ENCODE measurements at regions of chr17 and their contacts with region 1.

Region 1: DNA sequence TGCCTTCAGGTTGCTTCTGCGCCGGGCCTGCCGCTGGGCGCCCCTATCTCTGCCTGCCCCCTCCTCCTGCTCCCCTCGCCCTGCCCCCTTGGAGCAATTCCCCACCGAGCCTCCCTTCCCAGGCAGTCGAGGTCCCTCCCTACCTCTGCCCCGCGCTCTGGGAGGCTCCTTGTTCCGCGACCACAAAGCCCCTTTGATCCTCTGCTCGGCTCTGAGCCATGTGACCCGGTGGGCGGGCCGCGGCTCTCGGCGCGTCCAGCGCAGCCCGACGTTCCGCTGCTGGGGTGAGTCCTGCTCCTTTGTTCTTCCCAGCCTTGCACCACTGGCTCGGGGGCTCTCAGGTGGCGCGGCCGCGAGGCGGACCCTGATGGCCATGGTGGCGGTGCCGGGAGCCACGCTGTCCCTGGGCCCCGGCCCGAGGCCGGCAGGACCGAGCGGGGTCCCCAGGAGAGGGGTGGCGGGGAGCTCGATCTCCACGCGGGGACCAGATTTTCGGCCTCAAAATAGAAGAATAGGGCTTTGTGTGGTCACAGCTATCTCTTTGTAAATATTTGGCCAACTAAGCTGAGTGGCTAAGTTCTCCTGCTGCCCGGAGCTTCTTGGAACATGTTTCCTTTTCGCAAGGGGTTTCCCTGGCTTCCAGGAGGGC is 310.6 kb downstream of the SEC14L1 start:
- DNase-seq: peak; percentile 36 to 86 (median 73)
- ATAC-seq: peak; percentile 25
- H3K4me3 ChIP-seq: peak overlapping the region; percentile 93 to 99
- H3K4me3 Mint-ChIP-seq: peak overlapping the region; percentile 94
- H3K27ac ChIP-seq: peak overlapping the region; percentile 80 to 86
- H3K27ac Mint-ChIP-seq: peak overlapping the region; percentile 100
- H3K4me1 ChIP-seq: peaks cover 54% of the 10 kb centered on the region
- H3K4me1 Mint-ChIP-seq: peaks cover 50% of the 10 kb centered on the region
- H3K27me3 ChIP-seq: no peaks in the 10 kb centered on the region
- H3K27me3 Mint-ChIP-seq: no peaks in the 10 kb centered on the region
- CTCF ChIP-seq: no peak

Region 2: DNA sequence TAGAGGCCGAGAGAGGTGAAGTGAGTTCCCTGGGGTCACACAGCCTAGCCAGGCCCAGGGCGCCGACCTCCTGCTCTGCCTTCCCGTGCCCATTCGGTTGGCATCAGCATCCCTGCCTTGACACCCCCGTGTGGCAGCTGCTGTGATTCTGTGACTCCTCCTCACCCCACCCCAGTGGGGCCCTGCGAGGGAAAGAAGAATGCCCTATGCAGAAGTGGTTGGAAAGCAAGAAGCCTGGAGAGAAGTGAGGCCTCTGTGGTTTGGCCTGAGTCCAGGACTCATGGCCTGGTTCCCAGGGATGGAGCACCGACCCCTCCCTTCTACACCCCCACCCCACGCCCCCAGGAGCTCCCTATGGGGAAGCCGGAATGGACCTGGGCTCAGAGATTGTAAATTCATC is 14.4 kb before region 1 on chr17:
- CTCF ChIA-PET with region 1: interaction called, 142 read pairs
- POLR2A ChIA-PET with region 1: interaction called, 242 read pairs
- intact Hi-C with region 1: loop called (anchors 1 kb)
- DNase-seq: peak in 6 of 9 experiments; percentile 42 to 61 (median 56)
- ATAC-seq: no peak
- H3K4me3 ChIP-seq: peak overlapping the region in 1 of 2 experiments; percentile 70
- H3K4me3 Mint-ChIP-seq: peak overlapping the region; percentile 95
- H3K27ac ChIP-seq: peak overlapping the region; percentile 46 to 66
- H3K27ac Mint-ChIP-seq: peak overlapping the region; percentile 97
- H3K4me1 ChIP-seq: peaks cover 83% of the 10 kb centered on the region
- H3K4me1 Mint-ChIP-seq: peaks cover 88% of the 10 kb centered on the region
- H3K27me3 ChIP-seq: no peaks in the 10 kb centered on the region
- H3K27me3 Mint-ChIP-seq: no peaks in the 10 kb centered on the region
- CTCF ChIP-seq: no peak

Region 3: DNA sequence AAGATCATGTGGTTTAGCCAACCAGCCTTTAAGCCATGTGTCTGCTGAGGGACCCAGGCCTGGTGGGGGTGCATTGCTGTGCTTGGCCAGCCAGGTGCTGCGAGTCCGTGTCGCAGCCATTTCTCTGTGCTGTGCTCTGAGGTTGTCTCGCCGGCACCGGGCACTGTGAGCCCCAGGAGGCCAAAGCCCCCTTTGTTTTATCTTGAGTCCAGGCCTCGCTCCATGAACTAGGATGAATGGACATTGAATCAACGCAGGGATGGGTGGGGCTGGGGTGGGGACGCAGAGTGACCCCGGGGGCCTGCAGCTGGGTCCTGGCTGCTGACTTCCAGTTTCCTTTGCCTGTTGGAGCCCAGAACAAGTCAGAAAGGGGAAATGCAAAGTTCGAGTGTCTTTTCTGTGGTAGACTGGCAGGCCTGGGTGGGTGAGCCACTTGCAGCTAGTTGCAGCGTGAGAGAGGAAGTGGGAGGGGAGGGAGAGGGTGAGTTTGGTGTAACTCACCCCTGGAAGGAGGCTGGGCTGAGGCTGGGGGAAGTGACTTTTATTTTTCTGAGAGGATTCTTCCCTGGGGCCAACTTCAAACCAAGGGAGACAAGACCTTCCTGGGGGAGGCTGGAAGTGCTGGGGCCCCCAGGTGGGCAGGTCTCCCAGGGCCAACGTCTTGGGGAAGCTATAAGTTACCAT is 14.1 kb after region 1 on chr17:
- CTCF ChIA-PET with region 1: interaction called, 5 read pairs
- POLR2A ChIA-PET with region 1: interaction called, 242 read pairs
- intact Hi-C with region 1: loop called in 1 of 2 experiments (anchors 2 kb)
- DNase-seq: peak; percentile 58 to 93 (median 82)
- ATAC-seq: peak; percentile 91
- H3K4me3 ChIP-seq: peak overlapping the region; percentile 29 to 51
- H3K4me3 Mint-ChIP-seq: peak overlapping the region; percentile 71
- H3K27ac ChIP-seq: peak overlapping the region; percentile 28 to 68
- H3K27ac Mint-ChIP-seq: peak overlapping the region; percentile 94
- H3K4me1 ChIP-seq: peaks cover 94% of the 10 kb centered on the region
- H3K4me1 Mint-ChIP-seq: peaks cover 87% of the 10 kb centered on the region
- H3K27me3 ChIP-seq: no peaks in the 10 kb centered on the region
- H3K27me3 Mint-ChIP-seq: no peaks in the 10 kb centered on the region
- CTCF ChIP-seq: no peak

Region 4: GRCh38 chr17:77590951-77591735 is 139.8 kb after region 1 on chr17:
- CTCF ChIA-PET with region 1: no interaction called
- POLR2A ChIA-PET with region 1: no interaction called
- intact Hi-C with region 1: no loop called
- DNase-seq: no peak
- ATAC-seq: no peak
- H3K4me3 ChIP-seq: no peak overlapping the region
- H3K4me3 Mint-ChIP-seq: no peak overlapping the region
- H3K27ac ChIP-seq: no peak overlapping the region
- H3K27ac Mint-ChIP-seq: no peak overlapping the region
- H3K4me1 ChIP-seq: peaks cover 12% of the 10 kb centered on the region
- H3K4me1 Mint-ChIP-seq: peaks cover 17% of the 10 kb centered on the region
- H3K27me3 ChIP-seq: no peaks in the 10 kb centered on the region
- H3K27me3 Mint-ChIP-seq: peaks cover 3% of the 10 kb centered on the region
- CTCF ChIP-seq: no peak

Region 5: GRCh38 chr17:78759203-78759968 is 1308.0 kb after region 1 on chr17:
- CTCF ChIA-PET with region 1: no interaction called
- POLR2A ChIA-PET with region 1: no interaction called
- intact Hi-C with region 1: loop called in 1 of 2 experiments (anchors 10 kb)
- DNase-seq: peak; percentile 68 to 94 (median 87)
- ATAC-seq: peak; percentile 78
- H3K4me3 ChIP-seq: peak overlapping the region; percentile 19 to 21
- H3K4me3 Mint-ChIP-seq: peak overlapping the region; percentile 66
- H3K27ac ChIP-seq: peak overlapping the region; percentile 85 to 93
- H3K27ac Mint-ChIP-seq: peak overlapping the region; percentile 86
- H3K4me1 ChIP-seq: peaks cover 84% of the 10 kb centered on the region
- H3K4me1 Mint-ChIP-seq: peaks cover 77% of the 10 kb centered on the region
- H3K27me3 ChIP-seq: no peaks in the 10 kb centered on the region
- H3K27me3 Mint-ChIP-seq: no peaks in the 10 kb centered on the region
- CTCF ChIP-seq: no peak